A549 (cell line): ENCODE measurements at regions of chr4 and their contacts with region 1.

Region 1: GRCh38 chr4:12852338-12853307 is 631.5 kb downstream of the RAB28 start:
- DNase-seq: peak; percentile 23 to 61
- ATAC-seq: peak; percentile 91 to 92
- H3K4me3 ChIP-seq: no peak overlapping the region
- H3K27ac ChIP-seq: peak overlapping the region; percentile 27 to 43; a peak in 4 of 6 replicates
- H3K4me1 ChIP-seq: peaks cover 5% of the 10 kb centered on the region; the same call in 2 of the 3 replicates
- CTCF ChIP-seq: peak; percentile 64
- EP300 ChIP-seq: no peak
- POLR2A ChIP-seq: no peak
- RAD21 ChIP-seq: peak; percentile 69 to 79

Region 2: GRCh38 chr4:13548984-13549546 is 696.4 kb after region 1 on chr4:
- CTCF ChIA-PET with region 1: interaction called, 16 read pairs
- POLR2A ChIA-PET with region 1: no interaction called
- DNase-seq: peak; percentile 78 to 80
- ATAC-seq: peak; percentile 51 to 73; a peak in 5 of 6 replicates
- H3K4me3 ChIP-seq: peak overlapping the region; percentile 61
- H3K27ac ChIP-seq: peak overlapping the region; percentile 66 to 79
- H3K4me1 ChIP-seq: no peaks in the 10 kb centered on the region; the same call in 2 of the 3 replicates
- CTCF ChIP-seq: peak; percentile 83
- EP300 ChIP-seq: no peak
- POLR2A ChIP-seq: no peak
- RAD21 ChIP-seq: peak; percentile 88 to 89